Activated naive CD4-positive, alpha-beta T cell treated with anti-CD3 and anti-CD28 coated beads for 36 hours (primary cell): ENCODE measurements at regions of chr2 and their contacts with region 1.

Region 1: GRCh38 chr2:237026981-237027711 is 58.5 kb upstream of the COPS8 start:
- DNase-seq: peak; percentile 65
- H3K4me3 Mint-ChIP-seq: no peak overlapping the region
- H3K27ac Mint-ChIP-seq: no peak overlapping the region
- H3K4me1 Mint-ChIP-seq: no peaks in the 10 kb centered on the region
- H3K27me3 Mint-ChIP-seq: no peaks in the 10 kb centered on the region

Region 2: DNA sequence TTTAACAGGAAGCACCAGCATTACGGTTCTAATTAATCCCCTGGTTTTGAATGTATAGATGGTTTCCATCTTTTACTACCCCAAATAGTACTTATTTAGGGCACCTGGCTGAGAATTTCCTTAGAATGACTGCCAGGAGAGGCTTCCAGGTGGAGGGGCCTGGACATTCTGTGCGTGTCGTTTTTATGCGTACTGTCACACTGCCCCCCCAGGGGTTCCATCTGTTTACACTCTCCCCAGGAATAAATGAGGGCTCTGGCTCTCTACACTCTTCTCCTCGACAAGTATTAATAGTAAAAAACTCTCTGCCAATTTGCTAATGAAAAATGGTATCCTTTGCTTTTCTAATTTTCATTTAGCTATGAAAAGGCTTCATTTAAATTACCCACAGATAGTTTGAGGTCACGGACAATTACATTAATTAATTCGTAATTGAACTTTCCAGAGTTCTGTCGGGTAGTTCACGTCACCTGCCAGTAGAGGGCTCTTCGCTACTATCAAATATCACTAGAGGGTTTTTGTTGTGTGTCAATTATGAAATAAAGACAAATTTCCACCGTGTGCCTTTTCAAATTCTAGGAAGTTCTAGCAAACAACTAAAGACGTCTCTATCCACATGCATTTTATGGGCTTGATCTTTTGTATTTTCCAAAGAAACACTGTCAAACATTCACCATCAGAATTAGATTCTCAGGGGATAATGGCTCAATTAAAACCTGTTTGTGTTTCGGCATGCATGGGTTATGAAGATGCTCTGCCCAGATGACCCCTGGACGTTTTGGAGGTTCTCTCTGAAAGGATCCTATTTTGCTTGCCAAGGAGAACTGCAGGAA is 674.2 kb before region 1 on chr2:
- CTCF ChIA-PET with region 1: interaction called, 6 read pairs
- intact Hi-C with region 1: loop called (anchors 1 kb)
- DNase-seq: peak; percentile 45
- H3K4me3 Mint-ChIP-seq: no peak overlapping the region
- H3K27ac Mint-ChIP-seq: no peak overlapping the region
- H3K4me1 Mint-ChIP-seq: no peaks in the 10 kb centered on the region
- H3K27me3 Mint-ChIP-seq: no peaks in the 10 kb centered on the region